ENCODE measurements at regions of chr6 and their contacts with region 1.

Region 1: DNA sequence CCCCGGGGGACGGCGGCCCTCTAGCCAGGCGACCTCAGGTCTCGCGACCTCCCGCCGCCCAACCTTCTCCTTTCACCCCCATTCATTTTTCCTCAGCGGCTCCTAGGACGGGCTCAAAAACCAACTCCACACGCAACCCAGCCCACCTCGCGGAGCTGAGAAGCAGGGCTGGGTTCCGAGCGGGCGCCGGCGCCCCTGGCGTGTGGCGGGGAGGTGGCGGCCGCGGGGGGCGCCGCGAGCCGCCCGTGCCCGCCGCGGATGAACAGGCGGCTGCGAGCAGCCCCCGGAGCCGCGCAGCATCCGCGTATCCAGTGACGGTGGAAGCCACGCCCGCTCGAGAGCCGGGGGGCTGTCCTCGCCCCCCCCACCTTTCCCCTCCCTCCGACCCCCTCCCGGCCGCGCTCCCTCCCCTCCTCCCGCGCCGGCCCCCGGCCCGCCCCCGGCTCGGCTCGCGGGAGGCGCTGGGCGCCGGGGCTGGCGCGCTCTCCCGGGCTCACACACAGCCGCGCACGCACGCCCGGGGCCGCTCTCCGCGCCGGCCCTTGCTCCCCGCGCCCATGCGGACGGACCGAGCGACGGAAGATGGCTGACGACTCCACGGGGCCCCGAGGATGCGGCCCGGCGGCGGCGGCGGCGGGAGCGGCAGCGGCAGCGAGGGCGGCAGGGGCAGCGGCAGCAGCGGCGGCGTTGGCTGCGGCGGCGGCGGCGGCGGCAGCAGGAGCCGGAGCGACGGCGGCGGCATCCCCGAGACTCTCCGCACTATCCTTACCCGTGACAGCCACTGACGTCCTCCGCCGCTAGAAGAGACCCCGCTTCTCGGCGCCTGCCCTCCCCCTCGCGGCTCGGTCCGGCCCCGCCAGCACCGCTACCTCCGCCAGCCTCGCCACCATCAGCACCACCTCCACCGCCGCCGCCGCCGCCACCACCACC is at the start of gene SOBP:
- DNase-seq: peak; percentile 91
- H3K4me3 ChIP-seq: peak within 1 kb of the TSS; percentile 95
- H3K27ac ChIP-seq: peak within 1 kb of the TSS; percentile 68
- H3K4me1 ChIP-seq: peaks cover 46% of the 10 kb centered on the region
- CTCF ChIP-seq: peak; percentile 60
- total RNA-seq, gene SOBP: 16.0 and 21.5 TPM in 2 replicates

Region 2: DNA sequence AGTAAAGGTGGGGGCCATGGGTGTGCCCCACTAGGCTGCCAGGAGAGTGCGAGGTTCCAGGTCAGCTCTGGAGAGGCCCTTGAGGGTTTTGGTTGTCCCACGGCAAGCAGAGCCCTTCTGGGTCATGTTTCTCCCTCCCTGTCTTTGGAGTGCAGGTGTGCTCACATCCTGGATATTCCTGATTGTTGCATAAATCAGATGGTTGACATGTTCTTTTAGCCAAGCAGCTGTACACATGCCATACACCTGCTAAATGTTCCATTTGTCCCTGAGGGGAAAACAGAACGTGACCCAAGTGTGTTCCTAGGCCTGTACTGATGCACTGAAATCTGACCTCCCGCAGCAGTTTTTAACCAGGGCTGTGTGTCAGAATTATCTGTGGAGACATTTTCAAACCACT is 297.1 kb before region 1 on chr6:
- CTCF ChIA-PET with region 1: no interaction called
- POLR2A ChIA-PET with region 1: no interaction called
- intact Hi-C with region 1: no loop called
- DNase-seq: no peak
- H3K4me3 ChIP-seq: no peak overlapping the region
- H3K27ac ChIP-seq: no peak overlapping the region
- H3K4me1 ChIP-seq: no peaks in the 10 kb centered on the region
- CTCF ChIP-seq: no peak

Region 3: DNA sequence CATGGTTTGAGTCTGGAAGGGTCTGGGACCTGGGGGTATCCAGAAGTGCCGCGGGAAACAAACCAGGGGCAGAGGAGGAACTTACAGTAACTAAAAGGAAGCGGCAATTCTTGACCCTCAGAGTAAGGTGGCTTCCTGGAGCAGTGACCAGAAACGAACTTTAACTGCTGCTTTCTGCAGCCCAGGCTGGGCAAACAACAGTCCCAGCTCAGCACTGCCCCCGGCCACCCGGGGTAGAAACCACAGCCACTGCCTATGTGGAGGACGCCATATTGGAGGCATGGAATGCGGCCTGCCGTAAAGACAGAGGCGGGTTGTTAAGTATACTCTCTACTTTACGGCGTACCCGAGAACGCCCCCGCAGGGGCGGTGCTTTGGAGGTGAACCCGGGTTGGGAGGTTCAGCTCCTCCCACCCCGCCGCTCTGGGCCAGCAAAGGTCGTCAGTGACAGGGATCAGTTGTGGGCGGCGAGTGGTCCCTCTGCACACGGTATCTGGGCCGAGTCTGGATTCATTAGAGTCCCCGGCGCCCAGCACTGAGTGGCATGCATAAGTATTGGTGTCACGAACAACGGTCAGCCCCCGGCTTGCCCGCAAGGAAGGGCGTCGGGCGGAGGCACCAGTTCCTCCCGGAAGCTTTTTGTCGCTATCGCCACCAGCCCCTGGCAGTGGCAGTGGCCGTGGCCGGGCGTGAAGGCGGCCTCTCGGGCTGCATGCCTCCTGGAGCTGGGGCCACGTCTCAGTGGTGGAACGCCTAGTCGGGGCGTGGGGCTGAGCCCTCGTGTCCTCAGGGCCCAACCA is 30.4 kb before region 1 on chr6 and contains the start of gene PDSS2:
- CTCF ChIA-PET with region 1: interaction called, 4 read pairs
- POLR2A ChIA-PET with region 1: interaction called, 29 read pairs
- intact Hi-C with region 1: loop called (anchors 1 kb)
- DNase-seq: peak; percentile 99
- H3K4me3 ChIP-seq: peak within 1 kb of the TSS; percentile 86
- H3K27ac ChIP-seq: peak within 1 kb of the TSS; percentile 90
- H3K4me1 ChIP-seq: peaks cover 19% of the 10 kb centered on the region
- CTCF ChIP-seq: peak; percentile 77
- total RNA-seq, gene PDSS2: 7.4 and 14.7 TPM in 2 replicates

Region 4: DNA sequence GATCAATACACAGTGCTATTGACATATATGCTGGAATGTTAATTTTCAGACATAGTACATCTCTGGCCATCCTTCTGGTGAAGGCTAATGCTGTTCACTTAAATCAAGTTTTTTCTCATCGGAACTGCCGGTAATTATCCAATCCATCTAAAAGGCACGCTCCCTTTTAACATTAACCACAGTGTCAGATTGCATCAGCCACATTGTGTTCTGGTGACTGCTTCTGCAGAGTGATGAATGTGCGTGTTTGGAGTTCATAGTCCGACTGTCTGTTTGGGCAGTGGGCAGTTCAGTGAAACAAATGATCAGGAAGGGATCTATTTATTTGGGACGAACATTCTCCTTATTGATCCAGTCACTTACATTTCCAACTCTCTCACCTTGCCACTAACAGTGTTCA is 49.5 kb after region 1 on chr6:
- CTCF ChIA-PET with region 1: no interaction called
- POLR2A ChIA-PET with region 1: interaction called, 7 read pairs
- intact Hi-C with region 1: loop called (anchors 2 kb)
- DNase-seq: no peak
- H3K4me3 ChIP-seq: no peak overlapping the region
- H3K27ac ChIP-seq: peak overlapping the region; percentile 98
- H3K4me1 ChIP-seq: peaks cover 62% of the 10 kb centered on the region
- CTCF ChIP-seq: no peak

Region 5: DNA sequence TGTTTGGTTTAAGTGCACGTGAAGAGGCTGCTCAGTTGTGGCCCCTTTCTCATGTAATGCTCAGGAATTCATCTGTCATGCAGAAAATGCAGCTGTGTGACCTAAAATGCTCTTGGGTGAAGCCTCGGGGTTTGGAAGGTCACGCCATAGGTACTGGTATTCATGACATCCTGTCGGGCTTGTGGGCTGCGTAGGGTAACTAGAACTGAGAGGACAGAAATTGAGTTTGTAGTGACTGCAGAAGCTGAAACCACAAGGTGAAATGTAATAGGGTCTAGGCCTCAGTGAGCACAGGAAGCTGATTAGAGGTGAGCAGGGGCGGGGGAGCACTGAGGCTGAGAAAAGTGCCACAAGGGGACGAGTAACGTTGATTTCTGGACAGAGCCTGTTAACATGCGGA is 128.8 kb after region 1 on chr6:
- CTCF ChIA-PET with region 1: interaction called, 4 read pairs
- POLR2A ChIA-PET with region 1: interaction called, 5 read pairs
- intact Hi-C with region 1: loop called (anchors 1 kb)
- DNase-seq: peak; percentile 96
- H3K4me3 ChIP-seq: peak overlapping the region; percentile 56
- H3K27ac ChIP-seq: peak overlapping the region; percentile 98
- H3K4me1 ChIP-seq: peaks cover 94% of the 10 kb centered on the region
- CTCF ChIP-seq: no peak

Region 6: DNA sequence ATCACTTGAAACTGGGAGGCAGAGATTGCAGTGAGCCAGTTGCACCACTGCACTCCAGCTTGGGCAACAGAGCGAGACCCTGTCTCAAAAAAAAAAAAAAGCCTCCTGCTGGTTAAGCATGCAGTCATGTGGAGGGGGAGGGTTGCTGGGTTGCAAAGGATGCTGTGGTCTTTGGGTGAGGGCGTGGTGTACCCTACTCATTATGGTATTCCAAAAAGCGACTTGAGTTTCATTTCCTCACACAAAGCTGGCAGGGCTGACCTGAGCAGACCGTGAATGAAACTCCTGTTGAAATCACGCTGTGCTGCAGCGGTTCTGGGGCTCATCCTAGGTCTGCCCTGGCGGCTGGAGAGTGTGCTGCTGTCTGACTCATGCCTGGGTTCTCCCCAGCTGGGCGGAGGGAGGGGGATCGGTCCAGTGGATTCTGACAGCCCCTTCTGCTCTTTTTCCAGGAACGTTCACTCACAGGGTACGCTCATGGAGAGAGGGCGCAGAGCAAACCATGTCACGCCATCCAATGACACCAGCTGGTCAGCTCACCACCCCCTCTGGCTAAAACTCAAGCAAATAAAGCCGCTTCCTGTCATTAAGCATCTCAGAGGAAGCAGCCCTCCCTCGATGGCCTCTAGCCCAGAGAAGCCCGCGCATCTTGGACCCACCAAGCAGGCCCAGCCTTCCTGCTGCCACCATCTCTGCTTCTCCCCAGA is 168.0 kb after region 1 on chr6:
- CTCF ChIA-PET with region 1: interaction called, 4 read pairs
- POLR2A ChIA-PET with region 1: interaction called, 19 read pairs
- intact Hi-C with region 1: loop called (anchors 1 kb)
- DNase-seq: peak; percentile 99
- H3K4me3 ChIP-seq: peak overlapping the region; percentile 74
- H3K27ac ChIP-seq: peak overlapping the region; percentile 98
- H3K4me1 ChIP-seq: peaks cover 70% of the 10 kb centered on the region
- CTCF ChIP-seq: no peak

Region 7: GRCh38 chr6:109420796-109421583 is 1931.1 kb after region 1 on chr6:
- CTCF ChIA-PET with region 1: no interaction called
- POLR2A ChIA-PET with region 1: no interaction called
- intact Hi-C with region 1: no loop called
- DNase-seq: no peak
- H3K4me3 ChIP-seq: no peak overlapping the region
- H3K27ac ChIP-seq: no peak overlapping the region
- H3K4me1 ChIP-seq: peaks cover 19% of the 10 kb centered on the region
- CTCF ChIP-seq: no peak

Measured in OCI-LY7 (cell line).